ENCODE measurements at regions of chr6 and their contacts with region 1.

Region 1: GRCh38 chr6:158853072-158853871 is 34.1 kb upstream of the EZR start:
- DNase-seq: peak; percentile 87 to 94 (median 91)
- H3K4me3 ChIP-seq: peak overlapping the region in 1 of 3 experiments; percentile 53
- H3K4me3 Mint-ChIP-seq: no peak overlapping the region
- H3K27ac ChIP-seq: peak overlapping the region; percentile 86 to 91
- H3K27ac Mint-ChIP-seq: no peak overlapping the region
- H3K4me1 ChIP-seq: peaks cover 52 to 84% of the 10 kb centered on the region in 2 donors
- H3K4me1 Mint-ChIP-seq: peaks cover 32% of the 10 kb centered on the region
- H3K27me3 ChIP-seq: no peaks in the 10 kb centered on the region
- H3K27me3 Mint-ChIP-seq: no peaks in the 10 kb centered on the region
- CTCF ChIP-seq: no peak

Region 2: DNA sequence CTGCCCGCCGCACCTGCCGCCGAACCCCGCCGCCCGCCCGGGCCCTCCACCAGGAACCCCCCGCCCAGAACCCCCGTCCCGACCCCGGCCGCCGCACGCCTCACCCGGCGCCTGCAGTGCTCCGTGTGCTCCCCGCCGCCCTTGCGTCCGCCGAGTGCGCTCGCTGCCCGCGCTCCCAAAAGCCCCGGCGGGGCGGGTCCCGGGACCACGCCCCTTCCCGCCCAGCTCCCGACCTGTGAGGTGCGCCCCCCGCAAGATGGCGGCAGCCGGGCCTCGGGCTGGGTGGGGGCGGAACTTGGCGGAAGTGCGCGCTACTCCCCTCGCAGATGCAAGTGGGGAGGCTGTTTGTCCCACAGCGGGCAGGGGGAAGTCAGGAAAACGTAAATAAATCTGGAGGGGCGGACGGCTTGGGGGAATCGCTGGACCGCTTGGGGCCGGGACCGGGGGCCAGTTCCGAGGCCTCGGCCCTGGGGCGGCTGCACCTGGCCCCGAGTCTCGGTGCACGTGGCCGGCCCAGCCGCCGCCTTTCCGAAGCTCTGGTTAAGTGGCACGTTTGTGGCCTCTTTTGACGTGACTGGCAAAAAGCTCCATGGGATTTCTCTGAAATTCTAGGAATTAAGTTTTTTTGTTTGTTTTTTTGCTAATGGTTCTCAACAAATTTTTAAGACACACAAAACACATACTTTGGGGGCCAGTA is 33.9 kb before region 1 on chr6 and contains the start of gene EZR:
- intact Hi-C with region 1: loop called (anchors 5 kb)
- DNase-seq: peak; percentile 62 to 71 (median 68)
- H3K4me3 ChIP-seq: peak within 1 kb of the TSS; percentile 57 to 88 (median 76)
- H3K4me3 Mint-ChIP-seq: peak within 1 kb of the TSS; percentile 84 to 100
- H3K27ac ChIP-seq: peak within 1 kb of the TSS; percentile 88 to 92
- H3K27ac Mint-ChIP-seq: peak within 1 kb of the TSS; percentile 85 to 98 (median 91)
- H3K4me1 ChIP-seq: peaks cover 29 to 42% of the 10 kb centered on the region in 2 donors
- H3K4me1 Mint-ChIP-seq: peaks cover 40% of the 10 kb centered on the region
- H3K27me3 ChIP-seq: no peaks in the 10 kb centered on the region
- H3K27me3 Mint-ChIP-seq: peaks cover 0 to 7% (median 3%) of the 10 kb centered on the region in 3 donors
- CTCF ChIP-seq: no peak
- polyA plus RNA-seq, gene EZR: 68.1 to 95.8 (median 86.3) TPM

Region 3: GRCh38 chr6:158879180-158879579 is 25.9 kb after region 1 on chr6:
- intact Hi-C with region 1: no loop called
- DNase-seq: no peak
- H3K4me3 ChIP-seq: no peak overlapping the region
- H3K4me3 Mint-ChIP-seq: no peak overlapping the region
- H3K27ac ChIP-seq: no peak overlapping the region
- H3K27ac Mint-ChIP-seq: no peak overlapping the region
- H3K4me1 ChIP-seq: no peaks in the 10 kb centered on the region
- H3K4me1 Mint-ChIP-seq: no peaks in the 10 kb centered on the region
- H3K27me3 ChIP-seq: peaks cover 0 to under 1% of the 10 kb centered on the region in 2 donors
- H3K27me3 Mint-ChIP-seq: peaks cover 4 to 13% (median 9%) of the 10 kb centered on the region in 3 donors
- CTCF ChIP-seq: no peak

Measured in CD14-positive monocyte (primary cell).